IMR-90 (cell line): ENCODE measurements at regions of chr5 and their contacts with region 1.

Region 1: GRCh38 chr5:93588352-93589105 is 5.5 kb downstream of the NR2F1 start:
- DNase-seq: peak; percentile 59
- ATAC-seq: no peak
- H3K4me3 ChIP-seq: peak overlapping the region; percentile 99
- H3K27ac ChIP-seq: peak overlapping the region; percentile 99
- H3K4me1 ChIP-seq: peaks cover 20% of the 10 kb centered on the region
- H3K27me3 ChIP-seq: no peaks in the 10 kb centered on the region
- CTCF ChIP-seq: no peak
- POLR2A ChIP-seq: no peak
- RAD21 ChIP-seq: no peak

Region 2: GRCh38 chr5:93387521-93387920 is 201.0 kb before region 1 on chr5:
- CTCF ChIA-PET with region 1: no interaction called
- POLR2A ChIA-PET with region 1: no interaction called
- dilution Hi-C with region 1: no loop called
- in situ Hi-C with region 1: no loop called
- intact Hi-C with region 1: no loop called
- DNase-seq: no peak
- ATAC-seq: no peak
- H3K4me3 ChIP-seq: no peak overlapping the region
- H3K27ac ChIP-seq: no peak overlapping the region
- H3K4me1 ChIP-seq: no peaks in the 10 kb centered on the region
- H3K27me3 ChIP-seq: no peaks in the 10 kb centered on the region
- CTCF ChIP-seq: no peak
- POLR2A ChIP-seq: no peak
- RAD21 ChIP-seq: no peak

Region 3: DNA sequence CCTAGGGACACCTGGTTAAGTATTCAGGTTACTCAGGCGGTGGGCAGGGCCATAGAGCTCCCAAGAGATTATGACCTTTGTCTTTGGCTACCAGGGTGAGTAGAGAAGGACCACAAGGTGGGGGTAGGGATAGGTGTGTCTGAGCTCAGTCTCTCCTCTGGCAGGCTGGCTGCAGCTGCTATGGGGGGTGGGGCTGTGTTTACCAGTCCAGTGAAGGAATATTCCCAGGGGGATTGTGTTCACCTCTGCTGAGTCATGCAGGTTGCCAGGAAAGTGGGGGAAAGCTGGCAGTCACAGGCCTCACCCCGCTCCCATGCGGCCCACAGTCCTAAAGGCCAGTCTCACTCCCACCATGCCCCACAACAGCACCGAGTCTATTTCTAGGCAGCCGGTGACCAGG is 206.4 kb after region 1 on chr5:
- CTCF ChIA-PET with region 1: interaction called, 3 read pairs
- POLR2A ChIA-PET with region 1: interaction called, 20 read pairs
- dilution Hi-C with region 1: no loop called
- in situ Hi-C with region 1: no loop called
- intact Hi-C with region 1: loop called (anchors 2 kb)
- DNase-seq: no peak
- ATAC-seq: no peak
- H3K4me3 ChIP-seq: no peak overlapping the region
- H3K27ac ChIP-seq: no peak overlapping the region
- H3K4me1 ChIP-seq: peaks cover 2% of the 10 kb centered on the region; the same call in 1 of the 2 replicates
- H3K27me3 ChIP-seq: no peaks in the 10 kb centered on the region
- CTCF ChIP-seq: no peak
- POLR2A ChIP-seq: no peak
- RAD21 ChIP-seq: no peak